Dorsolateral prefrontal cortex (tissue), 120 donors: ENCODE measurements at regions of chr13 and their contacts with region 1.

Region 1: DNA sequence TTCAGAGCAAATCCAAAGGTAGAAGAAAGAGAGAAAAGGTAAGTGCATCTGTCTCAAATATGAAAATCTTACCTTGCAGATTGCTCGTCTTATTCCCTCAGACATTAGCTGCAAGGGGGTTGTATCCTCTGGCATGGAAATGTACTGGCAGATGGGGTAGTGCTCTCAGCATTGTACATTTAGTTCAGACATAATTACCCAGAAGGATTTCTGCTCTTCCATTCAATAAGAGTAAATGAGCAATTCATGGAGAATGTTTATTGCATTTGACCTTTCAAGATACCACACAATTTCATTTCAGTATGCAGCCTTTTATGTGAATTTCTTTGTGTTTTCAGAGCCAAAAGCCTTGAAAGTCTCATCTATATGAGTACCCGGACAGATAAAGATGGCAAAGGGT is 63.8 kb downstream of the SCEL start:
- DNase-seq: peak in 1 of 10 donors; percentile 61
- H3K4me3 ChIP-seq: peak overlapping the region in 2 of 59 donors; percentile 3 to 5
- H3K27ac ChIP-seq: peak overlapping the region in 42 of 59 donors; percentile 1 to 78 (median 50)
- H3K27me3 ChIP-seq: no peaks in the 10 kb centered on the region
- CTCF ChIP-seq: no peak

Region 2: DNA sequence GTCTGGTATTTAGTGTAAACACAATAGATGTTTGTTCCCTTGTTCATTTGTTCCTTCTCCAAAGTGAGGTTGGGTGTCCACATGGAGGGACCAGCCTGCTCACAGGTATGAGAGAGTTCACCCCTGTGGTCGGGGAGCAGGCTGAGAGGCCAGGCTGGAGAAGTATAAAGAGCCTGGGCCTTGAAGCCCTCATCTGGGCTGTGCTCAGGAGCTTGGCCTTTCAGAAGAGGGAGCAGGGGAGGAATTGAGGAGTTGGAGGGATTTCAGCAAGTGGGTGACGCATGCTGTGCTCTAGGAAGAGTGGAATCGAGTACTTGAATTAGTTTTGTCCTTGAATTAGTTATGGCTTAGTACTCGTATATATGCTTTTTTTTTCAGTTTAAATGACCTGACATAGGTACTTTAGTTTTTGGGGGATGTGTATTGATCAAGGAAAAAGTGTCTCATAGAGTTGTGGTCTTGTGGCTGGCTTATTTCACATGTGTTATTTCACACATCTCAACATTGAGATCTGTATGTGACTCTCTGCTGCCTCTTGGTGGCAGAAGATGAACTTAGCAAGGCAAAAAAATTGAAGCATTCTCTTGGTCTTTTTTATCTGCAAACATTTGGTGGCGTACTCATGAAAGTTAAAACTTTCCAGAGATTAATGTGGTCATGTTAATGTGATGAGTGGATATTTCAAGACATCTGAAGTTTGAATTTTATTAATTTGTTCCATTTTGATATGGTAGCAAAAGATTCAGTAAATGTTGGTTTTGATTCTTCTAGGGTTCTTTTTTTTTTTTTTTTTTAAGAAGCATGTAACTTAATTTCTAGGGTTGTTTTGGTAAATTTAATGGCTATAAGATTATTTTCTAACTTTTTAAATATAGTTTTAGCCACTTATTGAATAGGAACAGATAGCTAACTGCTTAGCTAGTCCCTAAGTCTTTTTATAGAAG is 152.4 kb after region 1 on chr13:
- intact Hi-C with region 1: loop called (anchors 5 kb)
- DNase-seq: peak in 1 of 10 donors; percentile 36
- H3K4me3 ChIP-seq: peak overlapping the region in 33 of 59 donors; percentile 1 to 69 (median 26)
- H3K27ac ChIP-seq: peak overlapping the region in 57 of 59 donors; percentile 23 to 98 (median 89)
- H3K27me3 ChIP-seq: no peaks in the 10 kb centered on the region
- CTCF ChIP-seq: peak; percentile 77 to 96 (median 87)